ENCODE measurements at regions of chr3 and their contacts with region 1.

Region 1: DNA sequence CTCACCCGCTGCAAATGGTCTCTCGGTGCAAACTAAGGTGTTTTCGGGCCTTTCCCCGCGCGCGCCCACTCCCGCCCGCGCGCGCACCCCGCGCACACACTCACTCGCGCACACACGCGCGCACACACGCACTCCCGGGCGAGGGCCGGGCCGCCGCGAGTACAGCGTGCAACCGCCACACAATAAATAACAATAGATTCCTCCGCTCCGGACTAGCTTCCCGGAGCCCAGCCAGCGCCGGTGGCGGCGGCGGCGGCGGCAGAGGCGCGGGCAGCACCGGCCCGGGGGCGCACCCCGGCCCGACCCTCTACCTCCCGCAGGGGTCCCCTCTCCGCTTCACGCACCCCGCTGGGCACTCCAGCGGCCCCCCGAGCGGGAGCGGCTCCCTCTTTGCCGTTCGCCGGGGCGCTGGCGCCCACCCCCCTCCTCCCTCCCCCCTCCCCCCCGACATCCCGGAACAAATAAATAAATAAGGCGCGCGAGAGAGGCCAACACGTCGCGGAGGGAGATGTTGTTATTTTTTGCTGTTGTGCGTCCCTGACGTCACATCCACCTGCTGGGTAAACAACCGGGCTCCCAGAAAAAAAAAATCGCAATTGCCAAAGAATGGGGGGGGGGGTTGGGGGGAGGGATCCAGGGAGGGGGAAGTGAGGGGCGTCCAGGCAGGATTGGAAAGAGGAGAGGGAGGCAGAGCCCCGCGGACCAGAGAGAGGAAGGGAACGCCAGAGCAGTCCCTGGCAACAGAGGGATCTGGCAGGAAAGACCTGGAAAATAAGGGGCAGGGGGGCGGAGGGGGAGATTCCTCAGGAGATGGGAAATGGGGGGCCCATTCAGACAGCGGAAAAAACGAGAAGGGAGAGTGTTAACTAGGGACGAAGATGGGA is at the start of gene FOXP1:
- DNase-seq: peak; percentile 79
- ATAC-seq: peak; percentile 49
- H3K4me3 Mint-ChIP-seq: peak within 1 kb of the TSS; percentile 91
- H3K27ac Mint-ChIP-seq: peak within 1 kb of the TSS; percentile 95
- H3K4me1 Mint-ChIP-seq: peaks cover 53% of the 10 kb centered on the region
- H3K27me3 Mint-ChIP-seq: no peaks in the 10 kb centered on the region
- total RNA-seq, gene FOXP1: 108 to 153 TPM

Region 2: GRCh38 chr3:70716832-70717231 is 867.0 kb before region 1 on chr3:
- CTCF ChIA-PET with region 1: no interaction called
- POLR2A ChIA-PET with region 1: no interaction called
- intact Hi-C with region 1: loop called in 1 of 2 experiments (anchors 2 kb)
- DNase-seq: peak; percentile 10
- ATAC-seq: no peak
- H3K4me3 Mint-ChIP-seq: no peak overlapping the region
- H3K27ac Mint-ChIP-seq: no peak overlapping the region
- H3K4me1 Mint-ChIP-seq: no peaks in the 10 kb centered on the region
- H3K27me3 Mint-ChIP-seq: peaks cover 3% of the 10 kb centered on the region

Region 3: DNA sequence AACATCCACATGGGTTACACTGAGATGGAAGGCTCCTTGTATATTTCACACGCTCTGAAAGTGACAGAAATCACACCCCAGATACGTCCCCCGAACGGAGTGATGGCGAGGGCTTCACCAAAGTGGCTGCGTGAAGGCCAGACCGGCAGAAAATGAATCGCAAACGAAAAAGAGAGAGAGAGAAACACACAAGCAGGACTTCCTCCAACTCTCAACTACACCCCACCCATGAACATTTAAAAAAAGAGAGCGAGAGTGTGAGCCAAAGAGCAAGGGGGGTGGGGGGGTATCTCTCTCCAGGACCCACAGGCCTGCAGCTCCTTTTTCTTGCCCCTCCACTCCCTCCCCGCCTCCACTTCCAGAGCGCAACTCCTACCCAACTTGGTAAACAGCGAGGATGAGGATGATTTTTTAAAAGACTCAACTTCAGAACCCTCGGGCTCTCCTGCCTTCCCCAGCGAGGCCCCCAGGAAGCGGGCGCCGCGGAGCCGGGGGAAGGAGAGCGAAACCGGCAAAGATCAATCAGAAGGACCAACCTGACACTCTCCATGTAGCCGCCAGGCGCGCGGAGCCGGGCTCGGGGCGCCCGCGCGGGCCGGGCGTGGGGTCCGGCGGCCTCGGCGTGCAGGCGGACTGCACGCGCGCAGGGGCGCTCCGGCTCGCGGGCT is 519.4 kb before region 1 on chr3:
- CTCF ChIA-PET with region 1: interaction called, 5 read pairs
- POLR2A ChIA-PET with region 1: interaction called, 20 read pairs
- intact Hi-C with region 1: loop called (anchors 1 to 2 kb)
- DNase-seq: peak; percentile 79
- ATAC-seq: peak; percentile 11
- H3K4me3 Mint-ChIP-seq: no peak overlapping the region
- H3K27ac Mint-ChIP-seq: no peak overlapping the region
- H3K4me1 Mint-ChIP-seq: peaks cover 63% of the 10 kb centered on the region
- H3K27me3 Mint-ChIP-seq: no peaks in the 10 kb centered on the region

Region 4: GRCh38 chr3:71183549-71183948 is 400.3 kb before region 1 on chr3:
- CTCF ChIA-PET with region 1: no interaction called
- POLR2A ChIA-PET with region 1: no interaction called
- intact Hi-C with region 1: no loop called
- DNase-seq: no peak
- ATAC-seq: no peak
- H3K4me3 Mint-ChIP-seq: no peak overlapping the region
- H3K27ac Mint-ChIP-seq: no peak overlapping the region
- H3K4me1 Mint-ChIP-seq: peaks cover 46% of the 10 kb centered on the region
- H3K27me3 Mint-ChIP-seq: no peaks in the 10 kb centered on the region

Region 5: GRCh38 chr3:71305231-71306206 is 278.3 kb before region 1 on chr3:
- CTCF ChIA-PET with region 1: interaction called, 6 read pairs
- POLR2A ChIA-PET with region 1: interaction called, 4 read pairs
- intact Hi-C with region 1: loop called (anchors 1 to 2 kb)
- DNase-seq: peak; percentile 38
- ATAC-seq: peak; percentile 8
- H3K4me3 Mint-ChIP-seq: peak overlapping the region; percentile 80
- H3K27ac Mint-ChIP-seq: peak overlapping the region; percentile 96
- H3K4me1 Mint-ChIP-seq: peaks cover 81% of the 10 kb centered on the region
- H3K27me3 Mint-ChIP-seq: no peaks in the 10 kb centered on the region

Region 6: GRCh38 chr3:71423151-71423906 is 160.5 kb before region 1 on chr3:
- CTCF ChIA-PET with region 1: interaction called, 4 read pairs
- POLR2A ChIA-PET with region 1: interaction called, 3 read pairs
- intact Hi-C with region 1: loop called in 1 of 2 experiments (anchors 2 kb)
- DNase-seq: no peak
- ATAC-seq: no peak
- H3K4me3 Mint-ChIP-seq: no peak overlapping the region
- H3K27ac Mint-ChIP-seq: peak overlapping the region; percentile 92
- H3K4me1 Mint-ChIP-seq: peaks cover 94% of the 10 kb centered on the region
- H3K27me3 Mint-ChIP-seq: no peaks in the 10 kb centered on the region

Region 7: GRCh38 chr3:71487418-71487817 is 96.4 kb before region 1 on chr3:
- CTCF ChIA-PET with region 1: no interaction called
- POLR2A ChIA-PET with region 1: no interaction called
- intact Hi-C with region 1: loop called in 1 of 2 experiments (anchors 2 kb)
- DNase-seq: no peak
- ATAC-seq: peak; percentile 11
- H3K4me3 Mint-ChIP-seq: peak overlapping the region; percentile 54
- H3K27ac Mint-ChIP-seq: peak overlapping the region; percentile 88
- H3K4me1 Mint-ChIP-seq: peaks cover 88% of the 10 kb centered on the region
- H3K27me3 Mint-ChIP-seq: no peaks in the 10 kb centered on the region

Region 8: DNA sequence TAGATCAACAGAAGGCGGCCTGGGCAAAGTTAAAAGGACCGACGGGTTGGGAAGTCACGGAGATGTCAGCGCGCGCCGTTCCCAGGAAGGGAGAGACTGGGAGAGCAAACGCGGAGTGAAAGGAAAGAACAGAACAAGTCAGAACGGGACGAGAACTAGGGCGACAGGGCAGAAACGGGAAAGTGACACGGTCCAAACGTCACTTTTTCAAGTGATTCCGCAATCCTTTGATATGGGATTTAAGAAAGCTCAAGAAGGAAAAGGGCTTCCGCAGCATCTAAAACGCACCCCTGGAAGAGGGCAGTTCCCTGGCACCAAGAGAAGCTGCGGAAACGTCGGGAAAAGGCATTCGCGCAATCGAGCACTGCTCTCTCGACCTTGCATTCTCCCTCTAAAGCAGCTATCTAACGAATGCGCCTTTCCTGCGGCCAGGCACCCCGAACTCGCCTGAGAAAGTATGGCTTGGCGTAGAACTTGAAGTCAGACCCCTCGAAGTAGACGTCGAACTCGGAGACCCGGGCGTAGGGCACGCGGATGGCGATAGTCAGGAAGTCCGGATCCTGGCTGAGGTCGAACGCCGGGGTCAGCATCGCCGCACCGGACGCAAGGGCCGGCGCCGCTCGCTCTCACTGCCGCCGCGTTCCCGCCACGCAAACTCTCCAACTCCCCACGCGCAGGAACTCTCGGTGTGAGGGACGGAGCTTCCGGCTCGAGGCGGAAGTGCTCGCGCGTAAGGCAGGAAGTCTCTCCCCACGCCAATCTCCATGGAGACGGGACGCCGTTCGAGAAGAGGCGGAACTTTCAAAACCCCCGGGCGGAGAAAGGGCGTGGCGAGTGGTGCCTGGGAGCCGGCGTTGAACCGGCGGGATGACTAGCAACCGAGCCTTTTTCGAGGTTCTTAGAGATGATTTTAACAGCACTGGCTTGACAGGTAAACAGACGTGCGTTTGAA is 1264.2 kb after region 1 on chr3 and contains the start of gene SHQ1:
- CTCF ChIA-PET with region 1: no interaction called
- POLR2A ChIA-PET with region 1: no interaction called
- intact Hi-C with region 1: loop called in 1 of 2 experiments (anchors 10 kb)
- DNase-seq: peak; percentile 98
- ATAC-seq: peak; percentile 90
- H3K4me3 Mint-ChIP-seq: peak within 1 kb of the TSS; percentile 99
- H3K27ac Mint-ChIP-seq: peak within 1 kb of the TSS; percentile 86
- H3K4me1 Mint-ChIP-seq: peaks cover 54% of the 10 kb centered on the region
- H3K27me3 Mint-ChIP-seq: peaks cover 1% of the 10 kb centered on the region
- total RNA-seq, gene SHQ1: 26.4 to 31.3 TPM